ENCODE measurements at regions of chr3 and their contacts with region 1.

Region 1: GRCh38 chr3:186783073-186783730 is at the start of gene EIF4A2:
- DNase-seq: peak; percentile 78
- ATAC-seq: peak; percentile 78
- H3K4me3 ChIP-seq: peak within 1 kb of the TSS; percentile 91 to 98 (median 95)
- H3K27ac ChIP-seq: peak within 1 kb of the TSS; percentile 99
- H3K4me1 ChIP-seq: peaks cover 54% of the 10 kb centered on the region
- H3K27me3 ChIP-seq: no peaks in the 10 kb centered on the region; a peak in 1 of 5 replicates
- CTCF ChIP-seq: no peak
- EP300 ChIP-seq: no peak; a peak in 1 of 4 replicates
- POLR2A ChIP-seq: peak; percentile 88 to 99
- RAD21 ChIP-seq: peak; percentile 27; the same call in 1 of the 2 replicates
- total RNA-seq, gene EIF4A2: 446 and 480 TPM in 2 replicates

Region 2: DNA sequence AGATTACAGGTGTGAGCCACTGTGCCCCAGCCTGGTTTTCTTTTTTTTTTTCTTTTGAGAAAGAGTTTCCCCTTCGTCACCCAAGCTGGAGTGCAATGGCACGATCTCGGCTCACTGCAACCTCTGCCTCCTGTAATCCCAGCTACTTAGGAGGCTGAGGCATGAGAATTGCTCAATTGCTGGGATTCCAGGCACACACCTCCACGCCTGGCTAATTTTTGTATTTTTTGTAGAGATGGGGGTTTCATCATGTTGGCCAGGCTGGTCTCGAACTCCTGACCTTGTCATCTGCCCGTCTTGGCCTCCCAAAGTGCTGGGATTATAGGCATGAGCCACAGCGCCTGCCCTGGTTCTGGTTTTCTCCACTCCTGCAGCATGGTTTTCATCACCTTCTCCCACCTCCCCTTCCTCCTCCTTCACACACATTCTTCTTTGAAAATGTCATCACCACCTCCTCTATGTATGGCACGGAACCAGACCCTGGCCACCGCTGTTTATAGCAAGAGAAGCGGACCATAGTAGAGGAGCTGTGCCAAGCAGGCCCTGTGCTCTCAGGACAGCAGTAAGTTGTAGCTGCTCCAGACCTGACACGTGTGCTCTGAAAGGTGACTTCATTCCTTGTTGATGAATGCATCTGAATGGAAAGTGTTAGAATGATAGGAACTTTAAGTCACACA is 185.0 kb before region 1 on chr3:
- CTCF ChIA-PET with region 1: no interaction called
- POLR2A ChIA-PET with region 1: interaction called, 11 read pairs
- in situ Hi-C with region 1: no loop called
- intact Hi-C with region 1: no loop called
- DNase-seq: peak; percentile 68
- ATAC-seq: peak; percentile 38
- H3K4me3 ChIP-seq: peak overlapping the region in 1 of 3 experiments; percentile 63; a peak in 2 of 6 replicates
- H3K27ac ChIP-seq: peak overlapping the region; percentile 95
- H3K4me1 ChIP-seq: peaks cover 96% of the 10 kb centered on the region
- H3K27me3 ChIP-seq: no peaks in the 10 kb centered on the region
- CTCF ChIP-seq: no peak
- EP300 ChIP-seq: no peak
- POLR2A ChIP-seq: no peak
- RAD21 ChIP-seq: no peak

Region 3: DNA sequence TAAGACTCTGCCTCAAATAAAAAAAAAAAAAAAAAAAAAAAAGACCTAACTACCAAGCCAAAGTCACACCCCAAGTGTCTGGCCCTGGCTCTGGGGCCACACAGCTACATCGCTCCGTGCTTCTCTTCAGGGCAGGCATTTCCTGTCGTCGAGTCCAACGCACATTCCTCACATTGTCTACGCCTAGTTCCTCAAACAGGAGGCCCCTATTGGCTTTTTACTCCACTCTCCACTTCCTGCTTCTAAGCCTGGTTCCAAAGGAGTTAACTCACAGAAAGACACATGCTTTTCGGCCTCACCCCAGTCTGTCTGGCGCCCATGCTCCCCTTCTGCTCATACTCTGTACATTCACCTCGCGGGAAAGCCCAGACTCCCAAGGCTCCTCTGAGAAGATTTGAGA is 37.2 kb before region 1 on chr3:
- CTCF ChIA-PET with region 1: no interaction called
- POLR2A ChIA-PET with region 1: interaction called, 23 read pairs
- in situ Hi-C with region 1: no loop called
- intact Hi-C with region 1: no loop called
- DNase-seq: peak; percentile 94
- ATAC-seq: peak; percentile 93
- H3K4me3 ChIP-seq: no peak overlapping the region
- H3K27ac ChIP-seq: peak overlapping the region; percentile 71
- H3K4me1 ChIP-seq: peaks cover 58% of the 10 kb centered on the region
- H3K27me3 ChIP-seq: no peaks in the 10 kb centered on the region
- CTCF ChIP-seq: no peak
- EP300 ChIP-seq: no peak; a peak in 1 of 4 replicates
- POLR2A ChIP-seq: peak; percentile 44 to 65; a peak in 3 of 4 replicates
- RAD21 ChIP-seq: no peak

Region 4: GRCh38 chr3:186772701-186773424 is 10.3 kb before region 1 on chr3:
- CTCF ChIA-PET with region 1: no interaction called
- POLR2A ChIA-PET with region 1: interaction called, 10 read pairs
- in situ Hi-C with region 1: no loop called
- intact Hi-C with region 1: no loop called
- DNase-seq: no peak
- ATAC-seq: peak; percentile 50
- H3K4me3 ChIP-seq: no peak overlapping the region
- H3K27ac ChIP-seq: no peak overlapping the region
- H3K4me1 ChIP-seq: peaks cover 7% of the 10 kb centered on the region; the same call in 1 of the 2 replicates
- H3K27me3 ChIP-seq: peaks cover 3 to 4% of the 10 kb centered on the region in 2 experiments; a peak in 2 of 5 replicates
- CTCF ChIP-seq: no peak
- EP300 ChIP-seq: no peak
- POLR2A ChIP-seq: no peak
- RAD21 ChIP-seq: no peak